HEK293 (cell line): ENCODE measurements at regions of chr5 and their contacts with region 1.

Region 1: DNA sequence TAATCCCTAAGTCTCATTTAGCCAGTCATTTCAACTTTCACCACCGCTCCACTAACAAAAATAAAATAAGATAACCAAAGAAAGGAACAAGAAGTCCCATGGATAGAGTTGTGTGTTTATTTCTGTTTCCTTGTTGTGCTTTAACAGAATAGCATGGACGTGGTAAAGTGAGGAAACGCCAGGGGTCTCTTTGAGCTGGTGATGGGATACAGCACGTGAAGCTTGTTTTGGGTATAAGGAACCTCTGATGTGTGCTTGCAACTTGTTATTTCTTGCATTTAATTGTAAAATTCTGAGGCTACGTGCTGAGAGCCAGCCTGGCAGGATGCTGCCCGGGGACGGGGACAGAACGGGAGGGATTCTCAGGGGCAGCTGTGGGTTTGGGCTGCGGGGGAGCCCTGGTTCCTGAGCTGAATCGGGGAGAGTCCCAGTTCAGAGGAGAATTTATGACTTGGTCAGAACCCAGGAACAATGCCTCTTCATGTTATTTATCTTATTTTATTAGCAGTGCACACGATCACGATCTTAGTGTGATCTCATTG is 63.4 kb downstream of the ANKRD33B start:
- H3K4me3 ChIP-seq: no peak overlapping the region
- H3K27ac ChIP-seq: peak overlapping the region; percentile 50; the same call in 1 of the 2 replicates
- H3K4me1 ChIP-seq: peaks cover 7% of the 10 kb centered on the region
- CTCF ChIP-seq: no peak

Region 2: DNA sequence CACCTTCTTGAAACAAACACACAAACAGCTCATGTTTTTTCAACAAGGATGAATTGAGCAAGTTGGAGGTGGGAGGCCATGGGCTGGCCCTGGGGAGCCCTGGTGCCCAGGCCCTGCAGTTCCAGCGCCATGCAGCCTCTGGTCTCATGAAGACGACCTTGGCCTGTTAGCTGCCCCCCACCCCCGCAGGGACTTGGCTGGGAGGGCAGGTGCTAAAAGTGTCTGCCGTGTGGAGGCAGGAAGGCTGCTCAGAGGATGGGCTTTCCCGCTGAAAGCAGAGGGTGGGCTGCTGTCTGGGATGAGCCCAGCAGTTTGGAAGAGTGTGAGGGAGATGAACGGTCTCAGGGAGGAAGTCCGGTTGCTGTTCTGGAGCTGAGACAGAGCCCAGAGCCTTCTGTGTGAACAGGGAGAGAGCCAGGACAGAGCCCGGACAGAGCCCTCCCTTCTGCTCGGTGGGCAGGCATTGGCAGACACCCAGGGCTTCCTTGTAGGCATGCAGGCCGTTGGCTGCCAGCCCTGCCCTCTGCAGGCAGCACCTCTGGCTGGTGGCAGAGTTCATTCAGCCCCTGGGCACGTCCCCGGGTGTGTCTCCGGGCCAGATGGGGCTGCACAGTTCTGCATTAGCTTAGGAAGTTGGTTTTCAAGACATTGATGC is 166.9 kb before region 1 on chr5:
- CTCF ChIA-PET with region 1: interaction called, 175 read pairs
- POLR2A ChIA-PET with region 1: no interaction called
- H3K4me3 ChIP-seq: no peak overlapping the region
- H3K27ac ChIP-seq: no peak overlapping the region
- H3K4me1 ChIP-seq: no peaks in the 10 kb centered on the region; the same call in 1 of the 2 replicates
- CTCF ChIP-seq: no peak

Region 3: DNA sequence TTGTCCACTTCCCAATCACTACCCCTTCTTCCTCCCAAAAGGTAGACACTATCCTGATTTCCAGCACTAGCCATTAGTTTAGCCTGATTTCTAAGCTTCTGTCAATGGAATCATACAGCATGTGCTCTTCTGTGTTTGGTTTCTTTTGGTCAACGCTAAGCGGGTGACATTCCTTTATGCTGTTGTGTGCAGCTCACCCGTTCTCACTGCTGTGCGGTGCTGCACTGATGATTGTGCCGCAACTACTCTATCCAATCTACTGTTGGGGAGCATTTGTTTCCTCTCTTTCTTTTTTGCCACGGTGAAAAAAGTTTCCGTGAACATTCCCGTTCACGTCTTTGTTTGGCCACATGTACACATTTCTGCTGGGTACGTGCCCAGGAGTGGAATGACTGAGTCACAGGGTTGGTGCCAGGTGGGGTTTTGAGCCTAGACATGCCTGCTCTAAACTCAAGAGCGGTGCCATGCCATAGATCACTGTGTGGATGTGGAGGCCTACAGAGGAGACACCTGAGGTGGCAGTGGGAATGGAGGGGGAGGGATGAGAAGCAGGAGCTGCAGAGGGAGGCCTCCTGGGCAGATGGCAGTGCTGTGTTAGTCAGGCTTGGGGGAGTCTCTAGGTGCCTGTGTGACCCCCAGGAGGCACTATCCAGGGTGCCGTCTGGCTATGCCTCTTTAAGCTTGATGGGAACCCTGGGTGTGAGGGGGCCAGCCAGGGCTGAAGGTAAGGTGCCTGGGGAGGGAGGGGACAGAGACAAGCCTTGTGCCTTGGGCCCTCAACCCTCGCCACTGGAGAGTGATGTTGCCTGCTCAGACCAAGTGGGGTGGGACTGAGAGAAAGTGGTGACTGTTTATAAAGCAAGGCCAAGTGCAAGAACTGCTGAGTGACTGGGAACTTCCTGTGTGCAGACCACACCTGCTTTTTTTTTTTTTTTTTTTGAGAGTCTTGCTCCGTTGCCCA is 74.8 kb before region 1 on chr5:
- CTCF ChIA-PET with region 1: interaction called, 7 read pairs
- POLR2A ChIA-PET with region 1: interaction called, 11 read pairs
- H3K4me3 ChIP-seq: no peak overlapping the region
- H3K27ac ChIP-seq: no peak overlapping the region
- H3K4me1 ChIP-seq: peaks cover 19% of the 10 kb centered on the region
- CTCF ChIP-seq: no peak

Region 4: GRCh38 chr5:10563945-10564837 is 63.0 kb before region 1 on chr5 and contains the start of gene ANKRD33B:
- CTCF ChIA-PET with region 1: interaction called, 13 read pairs
- POLR2A ChIA-PET with region 1: interaction called, 4 read pairs
- H3K4me3 ChIP-seq: peak within 1 kb of the TSS; percentile 71
- H3K27ac ChIP-seq: peak within 1 kb of the TSS; percentile 88
- H3K4me1 ChIP-seq: peaks cover 16% of the 10 kb centered on the region
- CTCF ChIP-seq: no peak

Region 5: GRCh38 chr5:10592598-10592997 is 34.6 kb before region 1 on chr5:
- CTCF ChIA-PET with region 1: interaction called, 10 read pairs
- POLR2A ChIA-PET with region 1: no interaction called
- H3K4me3 ChIP-seq: no peak overlapping the region
- H3K27ac ChIP-seq: no peak overlapping the region
- H3K4me1 ChIP-seq: peaks cover 26% of the 10 kb centered on the region
- CTCF ChIP-seq: no peak

Region 6: GRCh38 chr5:10601246-10602030 is 25.8 kb before region 1 on chr5:
- CTCF ChIA-PET with region 1: interaction called, 34 read pairs
- POLR2A ChIA-PET with region 1: interaction called, 10 read pairs
- H3K4me3 ChIP-seq: no peak overlapping the region
- H3K27ac ChIP-seq: peak overlapping the region; percentile 71
- H3K4me1 ChIP-seq: peaks cover 17% of the 10 kb centered on the region
- CTCF ChIP-seq: no peak

Region 7: DNA sequence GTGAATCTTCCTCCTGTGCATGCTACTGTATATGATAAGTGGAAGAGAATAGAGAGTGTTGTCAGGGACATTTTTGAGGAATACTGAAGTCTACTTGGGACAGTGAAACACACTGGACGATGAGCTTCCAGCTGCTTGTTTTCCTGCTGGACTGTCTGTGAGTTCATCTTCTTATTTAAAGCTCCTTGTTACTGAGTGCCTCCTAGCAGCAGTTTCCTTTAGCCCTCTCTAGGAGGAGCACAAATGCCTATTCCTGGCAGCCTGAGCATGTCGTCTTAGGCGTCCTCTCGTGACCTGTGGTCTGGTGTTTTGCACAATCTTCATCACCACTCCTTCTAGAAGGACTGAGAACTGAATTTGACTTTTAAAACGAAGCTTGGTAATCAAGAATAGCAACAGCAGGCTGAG is 19.6 kb before region 1 on chr5:
- CTCF ChIA-PET with region 1: interaction called, 34 read pairs
- POLR2A ChIA-PET with region 1: interaction called, 9 read pairs
- H3K4me3 ChIP-seq: no peak overlapping the region
- H3K27ac ChIP-seq: peak overlapping the region; percentile 54
- H3K4me1 ChIP-seq: peaks cover 10% of the 10 kb centered on the region
- CTCF ChIP-seq: no peak

Region 8: GRCh38 chr5:10701567-10702039 is 74.4 kb after region 1 on chr5:
- CTCF ChIA-PET with region 1: no interaction called
- POLR2A ChIA-PET with region 1: no interaction called
- H3K4me3 ChIP-seq: no peak overlapping the region
- H3K27ac ChIP-seq: no peak overlapping the region
- H3K4me1 ChIP-seq: no peaks in the 10 kb centered on the region
- CTCF ChIP-seq: no peak